ENCODE measurements at regions of chr4 and their contacts with region 1.

Region 1: DNA sequence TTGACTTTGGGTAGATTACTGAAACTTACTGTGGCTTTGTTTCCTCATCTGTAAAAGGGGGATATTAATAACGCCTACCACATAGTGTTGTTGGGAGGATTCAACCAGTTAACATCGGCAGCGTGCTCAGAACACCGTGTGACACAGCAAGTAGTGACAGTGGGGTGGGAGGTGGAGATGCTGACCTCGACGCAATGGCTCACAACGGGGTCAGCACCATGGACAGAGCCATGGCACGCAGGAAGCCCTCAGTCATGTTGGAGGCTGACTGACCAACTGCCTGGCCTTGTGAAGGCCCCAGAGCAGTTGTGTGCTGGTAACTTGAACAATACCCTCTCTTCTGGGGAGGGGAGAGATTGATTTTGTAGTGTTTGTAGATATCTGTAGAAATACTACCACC is 93.2 kb downstream of the WFS1 start:
- DNase-seq: peak in 1 of 9 donors; percentile 51
- ATAC-seq: peak; percentile 27
- H3K4me3 ChIP-seq: no peak overlapping the region
- H3K4me3 Mint-ChIP-seq: no peak overlapping the region
- H3K27ac ChIP-seq: no peak overlapping the region
- H3K27ac Mint-ChIP-seq: no peak overlapping the region
- H3K4me1 ChIP-seq: no peaks in the 10 kb centered on the region
- H3K4me1 Mint-ChIP-seq: no peaks in the 10 kb centered on the region
- H3K27me3 ChIP-seq: no peaks in the 10 kb centered on the region
- H3K27me3 Mint-ChIP-seq: peaks cover 3 to 26% (median 5%) of the 10 kb centered on the region in 5 donors

Region 2: GRCh38 chr4:6177587-6178197 is 185.2 kb before region 1 on chr4:
- CTCF ChIA-PET with region 1: no interaction called
- POLR2A ChIA-PET with region 1: no interaction called
- intact Hi-C with region 1: no loop called
- DNase-seq: peak in 2 of 9 donors; percentile 22 to 37
- ATAC-seq: peak; percentile 52
- H3K4me3 ChIP-seq: no peak overlapping the region
- H3K4me3 Mint-ChIP-seq: peak overlapping the region in 2 of 10 donors; percentile 55 to 70
- H3K27ac ChIP-seq: no peak overlapping the region
- H3K27ac Mint-ChIP-seq: peak overlapping the region in 2 of 9 donors; percentile 19 to 96
- H3K4me1 ChIP-seq: peaks cover 0 to 63% of the 10 kb centered on the region in 2 donors
- H3K4me1 Mint-ChIP-seq: peaks cover 0 to 69% (median 10%) of the 10 kb centered on the region in 7 donors
- H3K27me3 ChIP-seq: no peaks in the 10 kb centered on the region
- H3K27me3 Mint-ChIP-seq: peaks cover 0 to 37% (median 9%) of the 10 kb centered on the region in 5 donors

Region 3: DNA sequence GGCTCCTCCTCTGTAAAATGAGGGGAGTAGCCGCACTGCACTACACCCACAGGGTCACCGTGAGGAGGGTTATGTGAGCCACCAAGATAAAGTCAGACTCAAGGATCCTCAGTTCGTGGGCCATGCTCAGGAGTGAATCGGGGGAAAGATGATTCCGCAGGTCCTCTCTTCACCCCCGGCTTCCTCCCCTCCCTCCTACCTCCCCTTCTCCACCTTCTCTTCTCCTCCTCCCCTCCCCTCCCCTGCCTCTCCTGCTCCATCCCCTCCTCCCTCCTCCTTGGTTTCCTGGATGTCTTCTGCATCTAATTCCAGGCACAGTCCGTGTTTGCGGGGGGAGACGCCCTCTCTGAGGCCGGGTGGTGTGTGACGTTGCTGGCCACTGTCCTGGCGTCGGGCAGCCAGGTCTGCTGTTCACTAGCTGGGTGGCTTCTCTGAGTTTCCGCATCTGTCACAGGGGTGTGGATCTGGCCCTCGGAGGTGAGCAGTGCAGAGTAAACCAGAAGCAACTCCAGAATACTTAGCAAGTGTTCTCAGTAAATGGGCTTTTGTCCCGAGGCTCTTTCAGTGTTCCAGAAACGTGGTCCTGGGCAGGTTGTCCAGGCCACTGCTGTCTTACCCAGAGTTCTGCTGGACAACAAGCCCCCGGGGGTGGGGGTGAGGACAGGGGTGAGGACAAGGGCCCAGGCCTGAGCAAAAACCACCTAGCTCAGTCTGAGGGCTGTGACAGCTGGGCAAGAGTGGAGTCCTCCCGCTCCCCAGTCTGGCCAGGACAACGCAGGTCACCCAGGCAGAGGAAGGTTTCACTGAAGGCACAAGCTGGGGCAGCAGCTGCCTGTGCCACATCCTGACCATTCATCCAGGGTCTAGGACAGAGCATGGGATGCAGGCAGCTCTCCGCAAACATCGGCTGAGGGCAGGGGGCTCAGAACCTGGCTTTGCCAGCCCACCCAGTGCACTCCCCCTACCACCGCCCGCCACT is 17.2 kb after region 1 on chr4:
- CTCF ChIA-PET with region 1: no interaction called
- POLR2A ChIA-PET with region 1: no interaction called
- intact Hi-C with region 1: no loop called
- DNase-seq: no peak
- ATAC-seq: no peak
- H3K4me3 ChIP-seq: no peak overlapping the region
- H3K4me3 Mint-ChIP-seq: no peak overlapping the region
- H3K27ac ChIP-seq: no peak overlapping the region
- H3K27ac Mint-ChIP-seq: no peak overlapping the region
- H3K4me1 ChIP-seq: no peaks in the 10 kb centered on the region
- H3K4me1 Mint-ChIP-seq: no peaks in the 10 kb centered on the region
- H3K27me3 ChIP-seq: no peaks in the 10 kb centered on the region
- H3K27me3 Mint-ChIP-seq: peaks cover 4 to 35% (median 19%) of the 10 kb centered on the region in 5 donors

Region 4: GRCh38 chr4:6546681-6547447 is 184.0 kb after region 1 on chr4:
- CTCF ChIA-PET with region 1: no interaction called
- POLR2A ChIA-PET with region 1: no interaction called
- intact Hi-C with region 1: loop called in 1 of 2 experiments (anchors 2 kb)
- DNase-seq: peak; percentile 13 to 57 (median 36)
- ATAC-seq: peak; percentile 82
- H3K4me3 ChIP-seq: no peak overlapping the region
- H3K4me3 Mint-ChIP-seq: no peak overlapping the region
- H3K27ac ChIP-seq: no peak overlapping the region
- H3K27ac Mint-ChIP-seq: peak overlapping the region in 1 of 9 donors; percentile 18
- H3K4me1 ChIP-seq: no peaks in the 10 kb centered on the region
- H3K4me1 Mint-ChIP-seq: peaks cover 0 to 4% (median 0%) of the 10 kb centered on the region in 7 donors
- H3K27me3 ChIP-seq: no peaks in the 10 kb centered on the region
- H3K27me3 Mint-ChIP-seq: peaks cover 4 to 77% (median 58%) of the 10 kb centered on the region in 5 donors